T-cell (primary cell): ENCODE measurements at regions of chr22 and their contacts with region 1.

Region 1: DNA sequence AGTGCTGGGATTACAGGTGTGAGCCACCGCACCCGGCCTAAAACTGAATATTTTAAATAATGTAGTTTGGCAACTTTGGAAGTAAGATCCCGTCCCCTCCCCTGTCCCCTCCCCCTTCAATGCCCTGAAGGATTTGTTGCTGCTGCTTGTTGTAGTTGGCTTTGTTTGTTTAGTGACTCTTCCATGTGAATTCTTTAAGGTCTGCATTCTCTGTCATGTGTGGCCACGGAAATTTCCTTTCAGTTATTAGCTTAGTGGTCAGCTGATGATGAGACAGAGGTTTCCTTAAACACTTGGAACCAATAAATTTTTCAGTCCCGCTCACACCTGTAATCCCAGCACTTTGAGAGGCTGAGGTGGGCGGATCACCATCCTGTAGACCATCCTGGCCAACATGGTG is 109.9 kb downstream of the MPPED1 start:
- DNase-seq: no peak
- ATAC-seq: no peak
- H3K4me3 ChIP-seq: no peak overlapping the region
- H3K4me3 Mint-ChIP-seq: no peak overlapping the region
- H3K27ac ChIP-seq: no peak overlapping the region
- H3K27ac Mint-ChIP-seq: no peak overlapping the region
- H3K4me1 ChIP-seq: no peaks in the 10 kb centered on the region
- H3K4me1 Mint-ChIP-seq: no peaks in the 10 kb centered on the region
- H3K27me3 ChIP-seq: peaks cover 0 to 8% of the 10 kb centered on the region in 2 experiments
- H3K27me3 Mint-ChIP-seq: peaks cover 13 to 18% of the 10 kb centered on the region in 2 donors

Region 2: DNA sequence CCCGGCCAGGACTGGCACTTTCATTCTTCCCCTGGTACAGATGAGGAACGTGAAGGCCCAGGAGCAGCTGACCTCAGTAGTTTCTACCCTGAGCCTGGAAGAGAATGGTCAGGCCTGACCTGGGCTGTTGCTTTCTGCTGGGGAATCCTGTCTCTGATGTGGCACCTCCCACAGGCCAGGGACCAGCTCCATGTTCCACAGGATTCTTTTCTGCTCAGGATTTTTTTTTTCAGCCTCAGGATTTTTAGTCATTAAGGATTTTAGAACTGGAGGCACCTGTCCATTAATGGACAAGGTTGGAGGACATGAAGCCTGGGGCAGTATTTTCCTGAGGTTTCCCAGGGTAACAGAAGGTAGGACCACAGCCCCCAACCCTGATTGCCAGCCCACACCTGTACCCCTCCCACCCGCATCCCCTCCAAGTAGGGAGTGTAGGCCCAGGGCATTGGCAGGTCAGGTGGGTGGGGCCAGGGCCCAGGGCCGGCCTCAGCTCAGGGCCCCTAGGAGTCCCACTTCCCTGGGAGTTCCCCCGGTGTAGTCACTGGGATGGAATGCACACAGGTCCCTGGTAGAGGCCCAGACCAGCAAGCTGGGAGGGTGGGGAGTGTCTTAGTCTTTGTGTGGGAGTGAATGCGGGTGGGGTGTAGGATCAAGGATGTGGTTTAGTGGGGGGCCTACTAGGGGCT is 395.1 kb before region 1 on chr22:
- CTCF ChIA-PET with region 1: no interaction called
- POLR2A ChIA-PET with region 1: interaction called in 1 of 2 experiments, 10 read pairs
- DNase-seq: no peak
- ATAC-seq: no peak
- H3K4me3 ChIP-seq: no peak overlapping the region
- H3K4me3 Mint-ChIP-seq: no peak overlapping the region
- H3K27ac ChIP-seq: no peak overlapping the region
- H3K27ac Mint-ChIP-seq: no peak overlapping the region
- H3K4me1 ChIP-seq: peaks cover 0 to 3% of the 10 kb centered on the region in 2 experiments
- H3K4me1 Mint-ChIP-seq: peaks cover 0 to 4% (median 2%) of the 10 kb centered on the region in 3 donors
- H3K27me3 ChIP-seq: peaks cover 0 to 6% of the 10 kb centered on the region in 2 experiments
- H3K27me3 Mint-ChIP-seq: no peaks in the 10 kb centered on the region

Region 3: GRCh38 chr22:43501878-43502277 is 19.8 kb before region 1 on chr22:
- CTCF ChIA-PET with region 1: no interaction called
- POLR2A ChIA-PET with region 1: no interaction called
- DNase-seq: no peak
- ATAC-seq: no peak
- H3K4me3 ChIP-seq: no peak overlapping the region
- H3K4me3 Mint-ChIP-seq: no peak overlapping the region
- H3K27ac ChIP-seq: no peak overlapping the region
- H3K27ac Mint-ChIP-seq: no peak overlapping the region
- H3K4me1 ChIP-seq: no peaks in the 10 kb centered on the region
- H3K4me1 Mint-ChIP-seq: no peaks in the 10 kb centered on the region
- H3K27me3 ChIP-seq: peaks cover 0 to 9% of the 10 kb centered on the region in 2 experiments
- H3K27me3 Mint-ChIP-seq: no peaks in the 10 kb centered on the region